ENCODE measurements at regions of chr5 and their contacts with region 1.

Region 1: GRCh38 chr5:79990598-79991507 is at the start of gene MTX3:
- DNase-seq: peak; percentile 65 to 85 (median 82)
- ATAC-seq: peak; percentile 97
- H3K4me3 ChIP-seq: peak within 1 kb of the TSS; percentile 80
- H3K4me3 Mint-ChIP-seq: peak within 1 kb of the TSS; percentile 76 to 93 (median 88)
- H3K27ac ChIP-seq: peak within 1 kb of the TSS; percentile 75
- H3K27ac Mint-ChIP-seq: peak within 1 kb of the TSS; percentile 82 to 95 (median 92)
- H3K4me1 ChIP-seq: peaks cover 17 to 18% of the 10 kb centered on the region in 2 donors
- H3K4me1 Mint-ChIP-seq: peaks cover 17 to 47% (median 36%) of the 10 kb centered on the region in 7 donors
- H3K27me3 ChIP-seq: no peaks in the 10 kb centered on the region
- H3K27me3 Mint-ChIP-seq: peaks cover 0 to 13% (median 8%) of the 10 kb centered on the region in 5 donors
- total RNA-seq, gene MTX3: 12.9 to 31.0 (median 24.4) TPM

Region 2: DNA sequence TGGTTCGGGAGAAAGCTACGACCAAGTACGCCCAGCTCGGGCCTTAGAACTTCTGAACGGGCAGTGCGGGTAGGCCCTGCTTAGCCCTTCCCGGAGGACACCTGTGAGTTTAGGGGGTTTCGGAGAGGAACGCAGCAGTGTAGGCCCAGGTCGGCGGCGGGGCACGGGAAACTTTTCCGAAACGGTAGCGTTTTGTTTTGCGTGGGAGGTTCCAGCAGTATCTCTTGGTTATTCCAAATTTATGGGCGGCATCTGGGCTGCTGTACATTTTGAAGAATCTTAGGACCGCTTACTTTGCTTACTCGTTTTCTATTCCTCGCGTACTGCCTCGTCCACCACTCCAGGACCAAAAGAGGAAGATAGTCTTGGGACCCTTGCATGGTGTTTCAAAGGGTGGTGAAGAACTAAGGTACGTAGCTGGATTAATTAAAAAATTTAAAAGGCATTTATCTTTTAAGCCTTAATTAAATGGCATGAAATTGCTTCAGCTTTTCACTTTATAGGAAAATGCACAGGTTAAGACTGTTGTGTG is 378.1 kb before region 1 on chr5:
- CTCF ChIA-PET with region 1: no interaction called
- POLR2A ChIA-PET with region 1: no interaction called
- intact Hi-C with region 1: loop called (anchors 1 to 2 kb)
- DNase-seq: no peak
- ATAC-seq: no peak
- H3K4me3 ChIP-seq: peak overlapping the region; percentile 84
- H3K4me3 Mint-ChIP-seq: peak overlapping the region; percentile 95 to 100 (median 97)
- H3K27ac ChIP-seq: peak overlapping the region; percentile 90
- H3K27ac Mint-ChIP-seq: peak overlapping the region; percentile 91 to 99 (median 98)
- H3K4me1 ChIP-seq: peaks cover 14 to 18% of the 10 kb centered on the region in 2 donors
- H3K4me1 Mint-ChIP-seq: peaks cover 25 to 58% (median 44%) of the 10 kb centered on the region in 7 donors
- H3K27me3 ChIP-seq: no peaks in the 10 kb centered on the region
- H3K27me3 Mint-ChIP-seq: peaks cover 0 to 6% (median 2%) of the 10 kb centered on the region in 5 donors

Region 3: DNA sequence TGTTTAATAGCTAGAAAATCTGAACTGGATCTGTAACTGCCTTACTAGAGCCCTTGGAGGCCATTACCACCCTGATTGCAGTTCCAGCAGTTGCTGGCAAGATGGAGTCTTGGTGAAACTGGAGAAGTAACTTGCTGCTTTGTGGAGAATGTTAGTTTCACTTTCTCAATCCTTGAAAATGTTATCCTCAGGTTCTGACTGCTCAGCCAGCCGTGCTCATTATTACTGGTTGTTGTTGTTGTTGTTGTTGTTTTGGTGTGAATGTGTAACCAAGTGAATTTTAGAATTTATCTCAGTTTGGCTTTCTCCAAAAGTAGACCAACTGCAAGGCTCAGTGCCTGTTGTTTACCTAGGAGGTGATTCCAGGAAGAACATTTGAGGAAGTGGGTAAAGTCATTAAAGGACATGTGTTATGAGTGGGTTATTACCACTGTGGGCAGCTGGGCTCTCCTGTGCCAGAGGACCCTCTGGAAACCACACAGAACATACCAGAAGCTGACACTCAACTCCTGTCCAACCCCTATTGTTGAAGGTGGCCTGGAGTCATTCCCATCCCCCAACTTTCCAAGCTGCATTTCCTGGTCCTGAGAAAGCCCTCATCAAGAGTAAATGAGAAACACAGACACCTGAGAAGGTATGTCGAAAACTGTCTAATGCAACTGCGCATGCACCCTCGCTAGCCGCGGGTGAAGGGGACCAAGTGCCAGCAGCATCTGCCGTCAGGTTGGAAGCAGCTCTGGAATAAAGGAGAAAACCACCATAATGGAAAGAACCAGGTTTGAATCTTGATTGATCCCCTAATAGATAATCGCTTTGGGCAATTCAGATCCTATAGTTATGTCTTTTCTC is 189.7 kb before region 1 on chr5:
- CTCF ChIA-PET with region 1: no interaction called
- POLR2A ChIA-PET with region 1: no interaction called
- intact Hi-C with region 1: loop called in 1 of 2 experiments (anchors 2 kb)
- DNase-seq: no peak
- ATAC-seq: no peak
- H3K4me3 ChIP-seq: no peak overlapping the region
- H3K4me3 Mint-ChIP-seq: peak overlapping the region in 5 of 10 donors; percentile 6 to 67 (median 24)
- H3K27ac ChIP-seq: no peak overlapping the region
- H3K27ac Mint-ChIP-seq: peak overlapping the region in 2 of 9 donors; percentile 69 to 82
- H3K4me1 ChIP-seq: peaks cover 0 to 11% of the 10 kb centered on the region in 2 donors
- H3K4me1 Mint-ChIP-seq: peaks cover 13 to 28% (median 21%) of the 10 kb centered on the region in 7 donors
- H3K27me3 ChIP-seq: no peaks in the 10 kb centered on the region
- H3K27me3 Mint-ChIP-seq: no peaks in the 10 kb centered on the region

Region 4: GRCh38 chr5:79924936-79925893 is 65.6 kb before region 1 on chr5:
- CTCF ChIA-PET with region 1: no interaction called
- POLR2A ChIA-PET with region 1: no interaction called
- intact Hi-C with region 1: no loop called
- DNase-seq: peak in 6 of 9 donors; percentile 7 to 39 (median 22)
- ATAC-seq: no peak
- H3K4me3 ChIP-seq: no peak overlapping the region
- H3K4me3 Mint-ChIP-seq: no peak overlapping the region
- H3K27ac ChIP-seq: no peak overlapping the region
- H3K27ac Mint-ChIP-seq: no peak overlapping the region
- H3K4me1 ChIP-seq: no peaks in the 10 kb centered on the region
- H3K4me1 Mint-ChIP-seq: peaks cover 0 to 3% (median 0%) of the 10 kb centered on the region in 7 donors
- H3K27me3 ChIP-seq: no peaks in the 10 kb centered on the region
- H3K27me3 Mint-ChIP-seq: peaks cover 0 to 18% (median 0%) of the 10 kb centered on the region in 5 donors

Region 5: GRCh38 chr5:79962575-79963222 is 28.2 kb before region 1 on chr5:
- CTCF ChIA-PET with region 1: no interaction called
- POLR2A ChIA-PET with region 1: no interaction called
- intact Hi-C with region 1: loop called in 1 of 2 experiments (anchors 1 kb)
- DNase-seq: peak in 1 of 9 donors; percentile 41
- ATAC-seq: no peak
- H3K4me3 ChIP-seq: no peak overlapping the region
- H3K4me3 Mint-ChIP-seq: peak overlapping the region in 1 of 10 donors; percentile 5
- H3K27ac ChIP-seq: no peak overlapping the region
- H3K27ac Mint-ChIP-seq: peak overlapping the region in 1 of 9 donors; percentile 74
- H3K4me1 ChIP-seq: no peaks in the 10 kb centered on the region
- H3K4me1 Mint-ChIP-seq: peaks cover 0 to 23% (median 0%) of the 10 kb centered on the region in 7 donors
- H3K27me3 ChIP-seq: no peaks in the 10 kb centered on the region
- H3K27me3 Mint-ChIP-seq: peaks cover 5 to 14% (median 9%) of the 10 kb centered on the region in 5 donors

Region 6: GRCh38 chr5:80034962-80035821 is 44.3 kb after region 1 on chr5 and contains the start of gene THBS4:
- CTCF ChIA-PET with region 1: no interaction called
- POLR2A ChIA-PET with region 1: interaction called, 6 read pairs
- intact Hi-C with region 1: loop called in 1 of 2 experiments (anchors 1 kb)
- DNase-seq: peak in 1 of 9 donors; percentile 6
- ATAC-seq: no peak
- H3K4me3 ChIP-seq: no peak within 1 kb of the TSS
- H3K4me3 Mint-ChIP-seq: peak within 1 kb of the TSS; percentile 52 to 81 (median 68)
- H3K27ac ChIP-seq: no peak within 1 kb of the TSS
- H3K27ac Mint-ChIP-seq: no peak within 1 kb of the TSS
- H3K4me1 ChIP-seq: peaks cover 0 to 11% of the 10 kb centered on the region in 2 donors
- H3K4me1 Mint-ChIP-seq: peaks cover 0 to 27% (median 18%) of the 10 kb centered on the region in 7 donors
- H3K27me3 ChIP-seq: peaks cover 0 to 17% of the 10 kb centered on the region in 2 donors
- H3K27me3 Mint-ChIP-seq: peaks cover 55 to 73% (median 62%) of the 10 kb centered on the region in 5 donors
- total RNA-seq, gene THBS4: 0.53 to 1.2 (median 0.65) TPM

Measured in naive thymus-derived CD4-positive, alpha-beta T cell (primary cell).